ENCODE measurements at regions of chr13 and their contacts with region 1.

Region 1: DNA sequence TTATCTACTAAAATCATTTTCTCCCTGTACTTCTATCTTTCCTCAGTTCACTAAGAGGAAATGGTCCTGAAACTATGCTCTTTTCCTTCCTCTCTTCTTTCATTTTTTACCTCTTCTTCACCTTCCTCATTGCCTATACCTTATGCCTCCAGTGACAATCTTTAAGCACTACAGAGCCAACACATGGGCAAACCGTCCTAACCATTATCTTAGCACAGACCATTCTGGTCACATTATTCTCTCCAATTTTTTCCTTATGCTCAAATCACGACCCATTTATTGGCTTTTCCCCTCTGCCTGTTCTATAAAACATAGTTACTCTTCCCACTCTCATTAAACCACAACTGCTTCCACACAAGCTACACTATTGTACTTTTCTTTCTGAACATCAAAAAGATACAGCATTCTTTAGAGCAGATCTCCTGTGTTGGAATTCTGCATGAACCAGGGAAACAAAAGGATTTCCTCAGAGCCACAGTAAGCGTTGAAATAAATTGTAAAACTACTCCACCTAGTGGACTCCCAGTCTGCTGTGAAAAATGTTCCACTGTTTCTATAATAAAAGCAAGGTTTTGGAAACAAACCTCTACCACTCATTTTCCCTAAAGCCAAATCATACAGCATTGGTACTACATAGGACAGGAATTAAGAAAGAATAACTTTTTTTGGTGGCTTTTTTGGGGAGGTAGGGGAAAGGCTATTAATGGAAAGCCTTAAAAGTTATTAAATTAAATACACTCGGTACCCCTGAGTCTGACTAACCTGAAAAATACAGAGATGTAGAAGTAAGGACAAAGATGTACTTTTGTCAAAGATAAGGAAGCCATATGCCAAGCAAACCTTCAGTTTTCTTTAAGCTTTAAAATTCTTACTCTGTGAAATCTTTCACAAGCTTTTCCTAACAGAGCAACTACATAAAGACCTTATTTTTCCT is 19.5 kb downstream of the NUFIP1 start:
- DNase-seq: peak in 1 of 2 donors; percentile 22
- ATAC-seq: peak in 6 of 8 donors; percentile 56 to 79 (median 72)
- H3K4me3 ChIP-seq: no peak overlapping the region
- H3K27ac ChIP-seq: no peak overlapping the region
- H3K4me1 ChIP-seq: peaks cover 0 to 29% (median 7%) of the 10 kb centered on the region in 9 donors
- H3K27me3 ChIP-seq: no peaks in the 10 kb centered on the region
- CTCF ChIP-seq: peak; percentile 62 to 89 (median 81)

Region 2: DNA sequence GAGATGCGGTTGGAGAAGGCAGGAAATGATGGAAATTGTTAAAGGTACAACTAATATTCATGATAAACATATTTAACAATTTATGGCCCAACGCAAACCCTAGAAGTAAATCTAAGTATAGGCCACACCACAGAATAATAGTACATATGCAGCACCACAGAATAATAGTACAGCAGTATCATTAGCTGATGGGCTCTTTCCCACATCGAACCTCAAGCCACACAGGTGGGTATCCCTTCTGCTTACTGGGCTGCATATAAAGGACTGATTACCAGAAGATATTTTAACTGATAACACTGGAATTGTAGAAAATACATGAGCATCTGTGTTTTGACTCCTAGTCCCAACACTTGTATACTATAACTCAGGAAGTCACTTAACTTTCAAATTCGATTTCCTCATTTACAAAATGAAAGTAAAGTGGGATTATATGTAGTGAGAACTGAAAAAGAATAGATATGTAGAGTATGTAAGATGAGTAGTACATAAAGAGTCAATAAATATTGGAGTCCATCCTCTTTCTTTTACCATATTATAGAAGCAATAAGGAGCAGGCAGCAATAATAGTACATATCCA is 485.2 kb before region 1 on chr13:
- intact Hi-C with region 1: loop called (anchors 1 to 5 kb)
- DNase-seq: no peak
- ATAC-seq: peak in 2 of 8 donors; percentile 25 to 34
- H3K4me3 ChIP-seq: peak overlapping the region in 5 of 10 donors; percentile 1 to 23 (median 11)
- H3K27ac ChIP-seq: peak overlapping the region in 1 of 10 donors; percentile 60
- H3K4me1 ChIP-seq: peaks cover 0 to 20% (median 8%) of the 10 kb centered on the region in 9 donors
- H3K27me3 ChIP-seq: no peaks in the 10 kb centered on the region
- CTCF ChIP-seq: no peak

Region 3: GRCh38 chr13:44904967-44905366 is 64.9 kb before region 1 on chr13:
- intact Hi-C with region 1: no loop called
- DNase-seq: peak; percentile 13 to 28
- ATAC-seq: peak in 7 of 8 donors; percentile 39 to 73 (median 66)
- H3K4me3 ChIP-seq: no peak overlapping the region
- H3K27ac ChIP-seq: peak overlapping the region in 6 of 10 donors; percentile 39 to 67 (median 52)
- H3K4me1 ChIP-seq: peaks cover 0 to 39% (median 28%) of the 10 kb centered on the region in 9 donors
- H3K27me3 ChIP-seq: no peaks in the 10 kb centered on the region
- CTCF ChIP-seq: no peak

Region 4: DNA sequence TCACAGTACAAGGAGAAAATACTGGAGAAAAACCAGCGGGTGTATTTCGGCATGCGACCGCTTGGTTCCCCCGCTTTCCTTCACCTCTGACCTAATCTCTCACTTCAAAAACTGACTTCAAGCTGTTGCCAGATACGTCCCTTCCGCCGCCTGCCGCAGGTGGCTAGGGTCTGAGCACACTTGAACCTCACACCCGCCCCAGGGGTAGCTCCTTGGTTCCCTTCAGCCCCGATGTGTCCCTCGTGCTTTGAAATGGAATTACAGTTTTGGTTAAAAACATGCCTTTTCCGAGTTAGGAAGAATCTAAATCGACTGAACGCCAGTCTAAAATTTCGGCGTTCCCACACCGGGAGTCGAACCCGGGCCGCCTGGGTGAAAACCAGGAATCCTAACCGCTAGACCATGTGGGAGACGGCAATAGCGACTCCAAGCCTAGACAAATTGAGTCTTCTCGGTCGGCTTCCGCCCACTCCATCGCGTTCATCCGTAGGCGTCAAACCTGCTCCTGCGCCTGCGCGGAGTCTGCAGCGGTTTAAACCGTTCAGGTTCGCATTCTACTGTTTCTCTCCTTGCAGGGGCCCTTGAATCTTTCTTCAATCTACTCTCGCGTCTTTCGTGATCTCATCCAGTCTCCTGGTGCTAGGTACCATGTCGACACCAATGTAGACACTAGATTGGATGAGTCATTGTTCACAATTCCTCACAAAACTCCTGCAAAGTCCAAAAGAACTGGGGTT is 52.1 kb before region 1 on chr13:
- intact Hi-C with region 1: loop called in 3 of 10 experiments (anchors 5 kb)
- DNase-seq: peak; percentile 96 to 97
- ATAC-seq: peak; percentile 87 to 96 (median 94)
- H3K4me3 ChIP-seq: peak overlapping the region; percentile 36 to 68 (median 54)
- H3K27ac ChIP-seq: peak overlapping the region; percentile 84 to 96 (median 91)
- H3K4me1 ChIP-seq: peaks cover 7 to 37% (median 26%) of the 10 kb centered on the region in 9 donors
- H3K27me3 ChIP-seq: no peaks in the 10 kb centered on the region
- CTCF ChIP-seq: peak in 6 of 9 donors; percentile 26 to 58 (median 42)

Region 5: GRCh38 chr13:44927968-44928367 is 41.9 kb before region 1 on chr13:
- intact Hi-C with region 1: no loop called
- DNase-seq: no peak
- ATAC-seq: no peak
- H3K4me3 ChIP-seq: no peak overlapping the region
- H3K27ac ChIP-seq: no peak overlapping the region
- H3K4me1 ChIP-seq: peaks cover 0 to 33% (median 21%) of the 10 kb centered on the region in 9 donors
- H3K27me3 ChIP-seq: no peaks in the 10 kb centered on the region
- CTCF ChIP-seq: no peak

Region 6: GRCh38 chr13:44938854-44939253 is 31.0 kb before region 1 on chr13:
- intact Hi-C with region 1: loop called in 1 of 10 experiments (anchors 2 kb)
- DNase-seq: no peak
- ATAC-seq: no peak
- H3K4me3 ChIP-seq: no peak overlapping the region
- H3K27ac ChIP-seq: no peak overlapping the region
- H3K4me1 ChIP-seq: peaks cover 0 to 14% (median 0%) of the 10 kb centered on the region in 9 donors
- H3K27me3 ChIP-seq: no peaks in the 10 kb centered on the region
- CTCF ChIP-seq: no peak

Region 7: DNA sequence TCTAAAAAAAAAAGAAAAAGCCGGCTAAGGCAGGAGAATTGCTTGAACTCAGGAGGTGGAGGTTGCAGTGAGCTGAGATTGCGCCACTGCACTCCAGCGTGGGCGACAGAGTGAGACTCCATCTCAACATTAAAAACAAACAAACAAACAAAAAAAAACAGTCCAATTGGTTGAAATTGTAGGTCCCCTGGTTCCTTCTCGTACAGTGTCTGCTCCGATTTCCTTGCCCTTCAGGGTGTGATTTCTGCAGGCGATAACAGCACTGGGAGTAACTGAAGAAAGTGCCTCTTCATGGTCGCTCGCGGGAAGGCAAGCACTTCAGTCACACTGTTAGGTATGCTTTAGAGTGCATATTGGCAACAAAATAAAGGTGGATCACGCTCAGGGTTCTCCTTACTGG is 331.4 kb after region 1 on chr13:
- intact Hi-C with region 1: loop called in 3 of 10 experiments (anchors 5 to 10 kb)
- DNase-seq: no peak
- ATAC-seq: no peak
- H3K4me3 ChIP-seq: no peak overlapping the region
- H3K27ac ChIP-seq: no peak overlapping the region
- H3K4me1 ChIP-seq: peaks cover 0 to 17% (median 0%) of the 10 kb centered on the region in 9 donors
- H3K27me3 ChIP-seq: peaks cover 0 to 5% (median 0%) of the 10 kb centered on the region in 7 donors
- CTCF ChIP-seq: no peak

Region 8: GRCh38 chr13:45310341-45311125 is 340.7 kb after region 1 on chr13:
- intact Hi-C with region 1: loop called in 3 of 10 experiments (anchors 5 to 10 kb)
- DNase-seq: no peak
- ATAC-seq: no peak
- H3K4me3 ChIP-seq: peak overlapping the region; percentile 8 to 64 (median 58)
- H3K27ac ChIP-seq: no peak overlapping the region
- H3K4me1 ChIP-seq: peaks cover 0 to 25% (median 18%) of the 10 kb centered on the region in 9 donors
- H3K27me3 ChIP-seq: peaks cover 0 to 7% (median 0%) of the 10 kb centered on the region in 7 donors
- CTCF ChIP-seq: no peak